ENCODE measurements at regions of chr4 and their contacts with region 1.

Region 1: GRCh38 chr4:6250235-6250983 is 19.2 kb upstream of the WFS1 start:
- DNase-seq: peak; percentile 42
- ATAC-seq: peak; percentile 85
- H3K4me3 ChIP-seq: no peak overlapping the region
- H3K27ac ChIP-seq: no peak overlapping the region
- H3K4me1 ChIP-seq: no peaks in the 10 kb centered on the region
- H3K27me3 ChIP-seq: peaks cover 0 to 3% of the 10 kb centered on the region in 2 experiments; a peak in 2 of 4 replicates
- CTCF ChIP-seq: peak; percentile 70 to 81 (median 80); a peak in 5 of 6 replicates
- EP300 ChIP-seq: no peak
- POLR2A ChIP-seq: no peak
- RAD21 ChIP-seq: peak; percentile 91

Region 2: GRCh38 chr4:5069901-5070300 is 1180.5 kb before region 1 on chr4:
- CTCF ChIA-PET with region 1: no interaction called
- POLR2A ChIA-PET with region 1: no interaction called
- RAD21 ChIA-PET with region 1: no interaction called
- SMC1A ChIA-PET with region 1: no interaction called
- in situ Hi-C with region 1: no loop called
- intact Hi-C with region 1: no loop called
- DNase-seq: no peak
- ATAC-seq: no peak
- H3K4me3 ChIP-seq: no peak overlapping the region
- H3K27ac ChIP-seq: no peak overlapping the region
- H3K4me1 ChIP-seq: no peaks in the 10 kb centered on the region
- H3K27me3 ChIP-seq: no peaks in the 10 kb centered on the region
- CTCF ChIP-seq: no peak
- EP300 ChIP-seq: no peak
- POLR2A ChIP-seq: no peak
- RAD21 ChIP-seq: no peak

Region 3: GRCh38 chr4:5998333-5998936 is 252.0 kb before region 1 on chr4:
- CTCF ChIA-PET with region 1: interaction called, 80 read pairs
- POLR2A ChIA-PET with region 1: no interaction called
- RAD21 ChIA-PET with region 1: interaction called, 17 read pairs
- SMC1A ChIA-PET with region 1: interaction called, 40 read pairs
- in situ Hi-C with region 1: no loop called
- intact Hi-C with region 1: loop called (anchors 5 kb)
- DNase-seq: no peak
- ATAC-seq: peak; percentile 94
- H3K4me3 ChIP-seq: no peak overlapping the region
- H3K27ac ChIP-seq: no peak overlapping the region
- H3K4me1 ChIP-seq: peaks cover 11% of the 10 kb centered on the region
- H3K27me3 ChIP-seq: no peaks in the 10 kb centered on the region; a peak in 2 of 4 replicates
- CTCF ChIP-seq: peak; percentile 93 to 98 (median 94)
- EP300 ChIP-seq: no peak
- POLR2A ChIP-seq: no peak
- RAD21 ChIP-seq: peak; percentile 91

Region 4: DNA sequence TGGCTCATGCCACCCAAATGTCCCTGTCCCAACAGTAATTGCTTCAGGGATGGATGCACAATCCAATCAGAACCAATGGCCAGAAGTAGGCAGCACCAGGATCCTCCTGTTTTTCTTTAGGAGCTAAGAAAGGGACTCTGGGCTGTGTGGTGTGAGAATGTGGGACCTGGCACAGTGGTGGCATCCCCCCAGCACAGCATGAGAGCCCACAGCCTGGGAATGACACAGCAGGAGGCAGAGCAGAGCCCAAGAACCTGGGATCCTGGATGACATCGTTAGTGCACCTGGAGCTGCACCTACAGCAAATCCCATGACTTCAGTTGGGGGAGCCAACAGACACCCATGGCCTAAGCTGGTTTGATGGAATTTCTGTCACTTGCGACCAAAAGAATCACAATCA is 161.5 kb before region 1 on chr4:
- CTCF ChIA-PET with region 1: no interaction called
- POLR2A ChIA-PET with region 1: no interaction called
- RAD21 ChIA-PET with region 1: no interaction called
- SMC1A ChIA-PET with region 1: no interaction called
- in situ Hi-C with region 1: no loop called
- intact Hi-C with region 1: no loop called
- DNase-seq: no peak
- ATAC-seq: no peak
- H3K4me3 ChIP-seq: no peak overlapping the region
- H3K27ac ChIP-seq: no peak overlapping the region
- H3K4me1 ChIP-seq: peaks cover 3% of the 10 kb centered on the region; the same call in 1 of the 2 replicates
- H3K27me3 ChIP-seq: no peaks in the 10 kb centered on the region
- CTCF ChIP-seq: no peak
- EP300 ChIP-seq: no peak
- POLR2A ChIP-seq: no peak
- RAD21 ChIP-seq: no peak

Region 5: GRCh38 chr4:6153874-6154273 is 96.5 kb before region 1 on chr4:
- CTCF ChIA-PET with region 1: interaction called, 16 read pairs
- POLR2A ChIA-PET with region 1: no interaction called
- RAD21 ChIA-PET with region 1: no interaction called
- SMC1A ChIA-PET with region 1: interaction called, 3 read pairs
- in situ Hi-C with region 1: no loop called
- intact Hi-C with region 1: no loop called
- DNase-seq: no peak
- ATAC-seq: peak; percentile 76
- H3K4me3 ChIP-seq: no peak overlapping the region
- H3K27ac ChIP-seq: peak overlapping the region; percentile 42; the same call in 1 of the 2 replicates
- H3K4me1 ChIP-seq: peaks cover 21% of the 10 kb centered on the region
- H3K27me3 ChIP-seq: no peaks in the 10 kb centered on the region
- CTCF ChIP-seq: no peak
- EP300 ChIP-seq: no peak
- POLR2A ChIP-seq: no peak
- RAD21 ChIP-seq: no peak

Region 6: DNA sequence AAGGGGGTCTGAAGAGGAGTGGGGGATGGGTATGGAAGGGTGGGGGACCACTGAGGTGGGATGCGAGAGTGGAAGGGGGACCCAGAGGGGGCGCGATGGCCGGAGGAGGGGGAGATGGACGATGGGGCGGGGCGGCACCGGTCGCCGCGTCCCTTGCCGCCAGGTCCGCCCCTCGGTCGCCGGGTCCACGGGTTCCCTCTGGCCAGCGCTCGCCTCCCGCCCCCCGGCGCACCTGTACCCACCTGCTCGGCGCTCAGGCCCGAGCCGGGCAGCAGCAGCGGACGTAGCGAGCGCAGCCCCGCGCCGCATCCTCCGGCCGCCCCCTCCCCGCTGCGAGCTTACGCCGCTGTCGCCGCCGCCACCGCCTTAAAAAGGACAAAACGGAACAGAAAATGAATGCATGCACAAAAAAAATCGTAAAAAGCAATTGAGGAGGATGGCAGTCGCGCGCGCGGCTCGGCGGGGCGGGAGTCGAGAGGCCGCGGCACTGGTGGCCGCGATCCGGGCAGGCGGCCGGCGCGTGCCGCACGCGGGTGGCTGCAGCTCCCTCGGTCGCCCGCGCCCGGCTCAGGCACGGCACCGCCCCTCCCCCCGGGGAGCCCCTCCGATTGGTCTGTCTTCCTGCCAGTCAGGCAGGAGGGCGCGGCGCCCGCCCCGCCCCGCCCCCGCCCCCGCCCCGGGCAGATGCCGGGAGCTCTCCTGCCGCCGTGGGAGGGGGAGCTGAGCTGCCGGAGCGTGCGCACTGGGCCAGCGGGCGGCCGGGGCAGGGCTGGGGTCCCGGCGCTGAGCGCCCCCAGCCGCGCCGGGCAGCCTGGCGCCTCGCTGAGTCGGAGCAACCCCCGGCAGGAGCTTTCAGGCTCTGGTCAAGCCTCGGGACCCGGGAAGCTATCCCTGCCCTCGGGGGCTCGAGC is 50.1 kb before region 1 on chr4 and contains the start of gene JAKMIP1:
- CTCF ChIA-PET with region 1: interaction called, 34 read pairs
- POLR2A ChIA-PET with region 1: no interaction called
- RAD21 ChIA-PET with region 1: interaction called, 21 read pairs
- SMC1A ChIA-PET with region 1: interaction called, 21 read pairs
- in situ Hi-C with region 1: no loop called
- intact Hi-C with region 1: no loop called
- DNase-seq: no peak
- ATAC-seq: peak; percentile 62
- H3K4me3 ChIP-seq: peak within 1 kb of the TSS; percentile 98
- H3K27ac ChIP-seq: peak within 1 kb of the TSS; percentile 85
- H3K4me1 ChIP-seq: peaks cover 30% of the 10 kb centered on the region
- H3K27me3 ChIP-seq: no peaks in the 10 kb centered on the region
- CTCF ChIP-seq: no peak
- EP300 ChIP-seq: no peak
- POLR2A ChIP-seq: peak; percentile 69
- RAD21 ChIP-seq: no peak
- polyA plus RNA-seq, gene JAKMIP1: 0.52 to 1.6 TPM

Region 7: DNA sequence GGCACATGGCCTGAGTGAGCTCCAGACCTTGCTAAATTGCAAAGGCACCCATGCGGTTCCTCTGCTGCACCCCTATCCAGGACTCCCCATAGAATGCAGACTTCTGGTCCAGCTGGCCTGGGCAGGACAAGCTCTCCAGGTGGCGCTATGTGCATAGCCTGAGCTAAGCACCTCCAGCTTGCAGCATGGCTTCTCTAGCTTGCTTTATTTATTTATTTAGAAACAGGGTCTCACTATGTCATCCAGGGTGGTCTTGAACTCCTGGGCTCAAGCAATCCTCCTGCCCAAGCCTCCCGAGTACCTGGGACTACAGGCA is 13.8 kb after region 1 on chr4:
- CTCF ChIA-PET with region 1: interaction called, 172 read pairs
- POLR2A ChIA-PET with region 1: no interaction called
- RAD21 ChIA-PET with region 1: interaction called, 46 read pairs
- SMC1A ChIA-PET with region 1: interaction called, 96 read pairs
- in situ Hi-C with region 1: no loop called
- intact Hi-C with region 1: no loop called
- DNase-seq: no peak
- ATAC-seq: peak; percentile 83
- H3K4me3 ChIP-seq: no peak overlapping the region
- H3K27ac ChIP-seq: no peak overlapping the region
- H3K4me1 ChIP-seq: peaks cover 15% of the 10 kb centered on the region
- H3K27me3 ChIP-seq: no peaks in the 10 kb centered on the region
- CTCF ChIP-seq: peak; percentile 57 to 64 (median 59)
- EP300 ChIP-seq: no peak
- POLR2A ChIP-seq: no peak
- RAD21 ChIP-seq: peak; percentile 80

Region 8: DNA sequence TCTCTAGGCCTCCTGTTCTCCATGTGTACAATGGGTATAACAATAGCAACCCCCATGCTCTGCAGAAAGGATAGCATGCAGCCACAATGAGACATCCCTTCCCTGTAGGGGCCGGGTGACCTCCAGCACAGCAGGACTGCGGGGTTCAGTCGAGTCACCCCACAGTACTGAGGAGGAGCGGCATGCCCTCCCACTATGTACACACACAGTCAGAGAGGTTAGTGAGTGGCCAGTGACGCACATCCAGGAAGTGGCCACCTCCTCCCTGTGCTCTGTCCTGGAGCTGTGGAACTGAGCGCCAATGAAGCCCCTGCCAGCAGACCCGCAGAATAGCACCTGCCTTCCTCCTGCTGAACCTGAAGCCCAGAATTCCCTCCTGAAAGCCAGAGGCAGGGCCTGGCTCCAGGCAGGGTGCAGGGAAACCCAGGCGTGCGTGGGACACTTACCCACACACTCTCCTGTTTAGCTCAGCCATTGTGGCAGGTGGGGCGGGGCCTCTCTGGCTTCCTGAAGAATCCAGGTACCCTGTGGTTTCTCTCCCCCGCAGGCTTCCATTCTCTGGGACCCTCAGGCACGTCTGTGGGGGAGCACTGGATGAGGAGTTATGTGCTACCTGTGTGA is 69.2 kb after region 1 on chr4:
- CTCF ChIA-PET with region 1: interaction called, 469 read pairs
- POLR2A ChIA-PET with region 1: no interaction called
- RAD21 ChIA-PET with region 1: interaction called, 26 read pairs
- SMC1A ChIA-PET with region 1: interaction called, 137 read pairs
- in situ Hi-C with region 1: no loop called
- intact Hi-C with region 1: no loop called
- DNase-seq: no peak
- ATAC-seq: no peak
- H3K4me3 ChIP-seq: no peak overlapping the region
- H3K27ac ChIP-seq: no peak overlapping the region
- H3K4me1 ChIP-seq: no peaks in the 10 kb centered on the region
- H3K27me3 ChIP-seq: peaks cover 0 to under 1% of the 10 kb centered on the region in 2 experiments; a peak in 3 of 4 replicates
- CTCF ChIP-seq: no peak
- EP300 ChIP-seq: no peak
- POLR2A ChIP-seq: no peak
- RAD21 ChIP-seq: no peak

Region 9: GRCh38 chr4:7434766-7435150 is 1184.3 kb after region 1 on chr4 and contains the start of gene PSAPL1:
- CTCF ChIA-PET with region 1: no interaction called
- POLR2A ChIA-PET with region 1: no interaction called
- RAD21 ChIA-PET with region 1: no interaction called
- SMC1A ChIA-PET with region 1: no interaction called
- in situ Hi-C with region 1: no loop called
- intact Hi-C with region 1: no loop called
- DNase-seq: no peak
- ATAC-seq: no peak
- H3K4me3 ChIP-seq: no peak within 1 kb of the TSS
- H3K27ac ChIP-seq: no peak within 1 kb of the TSS
- H3K4me1 ChIP-seq: no peaks in the 10 kb centered on the region
- H3K27me3 ChIP-seq: no peaks in the 10 kb centered on the region; a peak in 1 of 4 replicates
- CTCF ChIP-seq: no peak
- EP300 ChIP-seq: no peak
- POLR2A ChIP-seq: no peak
- RAD21 ChIP-seq: no peak
- polyA plus RNA-seq, gene PSAPL1: not detected